ENCODE measurements at regions of chr15 and their contacts with region 1.

Region 1: DNA sequence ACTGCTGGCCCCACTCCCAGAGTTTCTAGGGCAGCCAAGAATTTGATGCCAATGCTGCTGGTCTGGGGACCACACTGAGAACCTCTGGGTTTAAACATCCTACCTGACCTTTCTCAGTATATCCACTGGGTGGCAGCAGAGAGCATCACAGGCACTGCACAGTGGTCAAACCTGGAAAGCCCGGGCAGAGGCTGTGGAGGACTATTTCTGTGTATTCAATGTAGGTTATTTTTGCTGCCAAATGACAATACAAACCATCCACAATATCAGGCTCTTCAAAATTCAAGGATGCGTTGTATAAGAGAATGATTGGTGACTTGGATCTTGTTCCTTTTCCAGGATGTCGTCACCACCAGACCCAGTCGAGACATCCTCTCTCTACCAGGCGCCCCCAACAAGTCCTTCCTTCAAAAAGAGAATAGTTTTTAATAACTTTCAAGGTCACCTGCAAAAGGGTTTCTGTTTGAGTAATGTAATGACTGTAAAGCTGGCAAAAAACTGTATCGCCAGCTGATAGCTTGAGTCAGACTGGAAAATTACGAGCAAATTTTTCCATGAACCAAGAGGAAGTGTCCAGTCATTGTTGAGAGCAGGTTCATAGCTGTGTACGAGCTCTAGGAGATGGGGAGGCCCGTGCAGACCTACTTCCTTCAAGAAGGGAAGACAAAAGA is 30.5 kb upstream of the MYZAP start:
- DNase-seq: peak; percentile 74
- ATAC-seq: peak; percentile 94 to 95

Region 2: DNA sequence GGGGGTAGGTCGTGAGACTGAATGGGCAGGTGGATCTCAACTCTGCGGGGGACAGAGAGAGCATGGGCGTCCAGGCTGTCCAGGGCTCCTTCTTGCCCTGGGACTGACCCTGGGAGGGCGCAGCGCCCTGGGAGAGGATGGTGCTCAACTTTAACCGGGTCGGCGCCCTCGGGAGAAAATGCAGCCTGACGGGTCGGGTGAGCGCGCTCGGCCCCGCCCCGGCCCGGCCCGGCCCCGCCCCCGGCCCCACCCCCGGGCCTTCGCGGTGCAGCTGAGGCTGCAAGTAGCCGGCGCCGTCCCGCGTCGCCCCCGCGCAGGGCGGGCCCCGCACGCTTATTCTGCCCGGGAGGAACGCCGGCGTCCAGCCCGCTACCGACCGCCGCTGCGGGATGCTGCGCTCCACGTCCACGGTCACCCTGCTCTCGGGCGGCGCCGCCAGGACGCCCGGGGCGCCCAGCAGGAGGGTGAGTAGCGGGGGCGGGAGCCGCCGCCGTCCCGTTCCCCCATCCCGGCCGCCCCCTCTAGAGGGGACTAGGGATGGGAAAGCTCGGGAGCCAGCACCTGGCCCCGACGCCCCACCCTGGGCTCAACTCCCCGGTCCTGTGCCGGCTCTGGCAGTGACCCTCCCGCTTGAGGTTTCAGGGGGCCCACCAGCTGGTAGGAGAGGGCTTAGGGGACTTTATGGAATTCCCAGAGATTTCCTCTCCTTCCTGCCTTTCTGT is 30.6 kb after region 1 on chr15 and contains the start of gene MYZAP:
- intact Hi-C with region 1: loop called in 1 of 2 experiments (anchors 2 kb)
- DNase-seq: peak; percentile 55
- ATAC-seq: peak; percentile 67 to 78
- total RNA-seq, gene MYZAP: 429 to 452 TPM

Region 3: DNA sequence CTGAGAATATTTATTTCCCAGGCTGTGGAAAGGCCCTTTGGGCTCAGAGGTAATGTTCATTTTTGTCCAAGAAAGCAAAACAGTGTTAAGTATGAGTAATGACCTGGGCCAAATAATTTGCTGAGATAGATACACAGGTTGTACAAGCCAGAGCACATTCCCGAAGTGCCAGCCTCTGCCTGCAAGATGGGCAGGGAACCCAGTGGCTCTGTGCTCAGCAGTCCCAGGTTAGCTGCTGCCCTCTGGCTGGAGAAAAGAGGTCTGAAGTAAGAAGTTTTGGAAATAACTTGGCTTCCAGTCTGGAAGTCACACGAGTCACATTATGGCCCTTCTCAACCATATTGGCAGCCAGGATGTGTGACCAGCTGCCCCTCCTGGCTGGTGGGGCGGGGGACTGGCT is 50.8 kb after region 1 on chr15:
- intact Hi-C with region 1: loop called in 1 of 2 experiments (anchors 5 kb)
- DNase-seq: peak; percentile 54
- ATAC-seq: peak; percentile 61 to 76

Region 4: DNA sequence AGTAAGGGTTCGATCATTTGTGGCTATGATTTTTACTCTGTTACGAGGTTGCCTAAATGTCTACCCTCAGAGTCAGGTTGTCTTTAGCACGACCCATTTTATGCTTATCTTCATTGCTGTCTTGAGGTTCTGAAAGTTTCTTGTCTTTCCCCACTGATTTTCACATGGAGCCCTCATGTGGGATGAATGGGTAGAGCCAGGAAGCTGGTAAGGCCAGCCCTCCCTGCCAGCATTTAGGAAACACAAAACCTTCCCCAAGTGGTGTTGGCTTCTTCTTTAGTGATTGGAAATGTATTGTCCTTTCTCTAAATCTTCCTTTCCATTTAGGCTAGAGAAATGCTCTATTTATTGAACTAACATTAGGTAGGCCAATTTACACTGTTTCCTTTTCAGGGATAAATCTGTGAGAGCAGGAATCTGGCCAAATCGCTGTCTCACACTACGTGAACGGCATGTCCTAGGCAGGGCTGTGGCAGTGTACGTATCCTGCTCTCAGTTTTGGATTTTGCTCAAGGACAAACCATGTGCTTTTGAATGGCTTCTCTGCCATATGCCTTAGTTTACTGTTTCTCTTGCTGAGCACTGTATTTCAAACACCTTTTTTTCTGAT is 74.2 kb after region 1 on chr15:
- intact Hi-C with region 1: loop called in 1 of 2 experiments (anchors 2 kb)
- DNase-seq: peak; percentile 52
- ATAC-seq: peak; percentile 78 to 85

Region 5: DNA sequence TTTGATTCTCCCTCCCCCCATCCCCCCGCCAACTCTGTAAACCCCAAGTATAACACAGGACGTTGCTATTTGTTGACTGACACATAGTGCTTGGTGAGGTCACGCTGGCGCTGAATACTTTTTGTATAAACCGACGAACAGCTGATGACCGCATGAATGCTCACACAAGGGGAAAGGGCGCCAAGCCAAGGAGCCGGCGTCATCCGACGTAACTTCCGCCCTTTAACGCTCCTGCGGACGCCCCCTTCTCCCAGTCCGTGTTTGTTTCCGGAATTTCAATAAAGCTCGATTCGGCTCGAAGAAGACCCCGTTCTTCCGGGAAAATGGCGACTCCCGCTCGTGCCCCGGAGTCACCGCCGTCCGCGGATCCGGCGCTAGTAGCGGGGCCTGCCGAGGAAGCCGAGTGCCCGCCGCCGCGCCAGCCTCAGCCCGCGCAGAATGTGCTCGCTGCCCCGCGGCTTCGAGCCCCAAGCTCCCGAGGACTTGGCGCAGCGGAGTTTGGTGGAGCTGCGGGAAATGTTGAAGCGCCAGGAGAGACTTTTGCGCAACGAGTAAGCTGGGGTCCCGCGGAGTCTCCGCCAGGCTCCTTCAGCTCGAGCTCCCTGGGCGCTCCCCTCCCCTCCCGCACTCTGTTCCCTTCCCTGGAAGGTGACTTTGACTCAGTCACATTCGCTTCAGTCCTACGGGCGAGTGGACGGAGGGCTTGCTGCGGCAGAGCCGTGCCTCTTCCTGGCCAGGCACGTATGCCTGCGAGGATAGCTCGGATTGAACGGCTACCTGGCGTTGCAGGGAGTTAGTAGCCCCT is 145.4 kb after region 1 on chr15 and contains the start of gene POLR2M:
- intact Hi-C with region 1: loop called in 1 of 2 experiments (anchors 5 kb)
- DNase-seq: peak; percentile 98
- ATAC-seq: peak; percentile 96 to 97
- total RNA-seq, gene POLR2M: 45.6 to 51.2 TPM

Region 6: GRCh38 chr15:58070801-58071418 is 509.7 kb after region 1 on chr15:
- intact Hi-C with region 1: loop called in 1 of 2 experiments (anchors 10 kb)
- DNase-seq: peak; percentile 59
- ATAC-seq: no peak